ENCODE measurements at regions of chr17 and their contacts with region 1.

Region 1: GRCh38 chr17:77772461-77772897 is 186.0 kb upstream of the TNRC6C start:
- DNase-seq: peak; percentile 83
- ATAC-seq: peak; percentile 91

Region 2: GRCh38 chr17:77741109-77741508 is 31.4 kb before region 1 on chr17:
- intact Hi-C with region 1: no loop called
- DNase-seq: no peak
- ATAC-seq: no peak

Region 3: GRCh38 chr17:77924757-77925336 is 152.4 kb after region 1 on chr17:
- intact Hi-C with region 1: no loop called
- DNase-seq: peak; percentile 85
- ATAC-seq: peak; percentile 91

Region 4: DNA sequence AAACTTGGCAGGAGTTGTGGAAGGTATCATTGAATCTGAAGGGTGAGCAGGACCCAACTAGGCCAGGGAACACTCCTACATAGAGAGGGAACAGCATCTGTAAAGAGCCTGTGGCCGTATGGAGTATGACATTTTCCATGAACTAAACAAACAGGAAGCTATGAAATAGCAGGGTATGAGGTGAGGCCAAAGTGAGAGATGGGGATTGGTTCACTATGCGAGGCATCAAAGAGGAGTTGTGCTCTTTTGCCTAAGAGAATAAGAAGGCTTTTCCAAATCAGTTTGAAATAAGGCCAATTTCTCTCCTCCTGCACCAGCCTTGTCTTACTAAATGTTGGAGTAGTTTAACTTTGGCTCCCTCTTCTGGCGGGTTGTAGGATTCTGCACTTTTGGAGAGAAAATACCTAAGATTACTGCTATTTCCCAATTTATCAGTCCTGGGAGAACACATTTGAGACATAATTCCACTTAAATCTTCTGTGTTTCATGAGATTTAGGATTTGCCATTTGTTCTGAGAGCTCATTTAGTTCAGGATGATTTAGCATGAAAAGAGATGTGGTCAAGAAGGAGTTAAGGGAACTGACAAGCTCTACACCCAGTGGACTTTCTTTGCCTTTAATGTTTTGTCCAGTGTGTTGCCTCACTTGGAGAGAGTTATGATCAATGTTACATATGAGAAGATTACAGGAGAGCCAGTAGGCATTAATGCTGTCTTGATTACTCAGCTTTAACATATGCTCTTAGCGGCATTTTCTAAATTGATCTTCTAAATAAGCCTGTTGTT is 241.4 kb after region 1 on chr17:
- intact Hi-C with region 1: loop called (anchors 2 kb)
- DNase-seq: no peak
- ATAC-seq: peak; percentile 74